ENCODE measurements at regions of chr5 and their contacts with region 1.

Region 1: GRCh38 chr5:141040771-141041426 is 10.3 kb upstream of the PCDHB1 start:
- DNase-seq: peak; percentile 88
- ATAC-seq: peak; percentile 77
- H3K4me3 Mint-ChIP-seq: no peak overlapping the region
- H3K27ac Mint-ChIP-seq: no peak overlapping the region
- H3K4me1 Mint-ChIP-seq: no peaks in the 10 kb centered on the region
- H3K27me3 Mint-ChIP-seq: peaks cover 10% of the 10 kb centered on the region
- CTCF ChIP-seq: peak; percentile 65

Region 2: GRCh38 chr5:140870221-140871201 is 170.4 kb before region 1 on chr5:
- CTCF ChIA-PET with region 1: no interaction called
- POLR2A ChIA-PET with region 1: no interaction called
- intact Hi-C with region 1: loop called (anchors 5 kb)
- DNase-seq: no peak
- ATAC-seq: no peak
- H3K4me3 Mint-ChIP-seq: no peak overlapping the region
- H3K27ac Mint-ChIP-seq: no peak overlapping the region
- H3K4me1 Mint-ChIP-seq: no peaks in the 10 kb centered on the region
- H3K27me3 Mint-ChIP-seq: peaks cover 25% of the 10 kb centered on the region
- CTCF ChIP-seq: no peak

Region 3: GRCh38 chr5:140964356-140964755 is 76.5 kb before region 1 on chr5:
- CTCF ChIA-PET with region 1: no interaction called
- POLR2A ChIA-PET with region 1: no interaction called
- intact Hi-C with region 1: no loop called
- DNase-seq: no peak
- ATAC-seq: no peak
- H3K4me3 Mint-ChIP-seq: no peak overlapping the region
- H3K27ac Mint-ChIP-seq: no peak overlapping the region
- H3K4me1 Mint-ChIP-seq: no peaks in the 10 kb centered on the region
- H3K27me3 Mint-ChIP-seq: peaks cover 29% of the 10 kb centered on the region
- CTCF ChIP-seq: no peak

Region 4: GRCh38 chr5:140996060-140996459 is 44.8 kb before region 1 on chr5:
- CTCF ChIA-PET with region 1: no interaction called
- POLR2A ChIA-PET with region 1: no interaction called
- intact Hi-C with region 1: no loop called
- DNase-seq: no peak
- ATAC-seq: no peak
- H3K4me3 Mint-ChIP-seq: no peak overlapping the region
- H3K27ac Mint-ChIP-seq: no peak overlapping the region
- H3K4me1 Mint-ChIP-seq: no peaks in the 10 kb centered on the region
- H3K27me3 Mint-ChIP-seq: peaks cover 11% of the 10 kb centered on the region
- CTCF ChIP-seq: no peak

Region 5: GRCh38 chr5:141051526-141051876 is 10.6 kb after region 1 on chr5:
- CTCF ChIA-PET with region 1: no interaction called
- POLR2A ChIA-PET with region 1: no interaction called
- intact Hi-C with region 1: no loop called
- DNase-seq: no peak
- ATAC-seq: no peak
- H3K4me3 Mint-ChIP-seq: peak overlapping the region; percentile 24
- H3K27ac Mint-ChIP-seq: no peak overlapping the region
- H3K4me1 Mint-ChIP-seq: peaks cover 5% of the 10 kb centered on the region
- H3K27me3 Mint-ChIP-seq: peaks cover 47% of the 10 kb centered on the region
- CTCF ChIP-seq: no peak

Measured in activated CD8-positive, alpha-beta T cell treated with anti-CD3 and anti-CD28 coated beads for 36 hours (primary cell).